ENCODE measurements at regions of chr1 and their contacts with region 1.

Region 1: DNA sequence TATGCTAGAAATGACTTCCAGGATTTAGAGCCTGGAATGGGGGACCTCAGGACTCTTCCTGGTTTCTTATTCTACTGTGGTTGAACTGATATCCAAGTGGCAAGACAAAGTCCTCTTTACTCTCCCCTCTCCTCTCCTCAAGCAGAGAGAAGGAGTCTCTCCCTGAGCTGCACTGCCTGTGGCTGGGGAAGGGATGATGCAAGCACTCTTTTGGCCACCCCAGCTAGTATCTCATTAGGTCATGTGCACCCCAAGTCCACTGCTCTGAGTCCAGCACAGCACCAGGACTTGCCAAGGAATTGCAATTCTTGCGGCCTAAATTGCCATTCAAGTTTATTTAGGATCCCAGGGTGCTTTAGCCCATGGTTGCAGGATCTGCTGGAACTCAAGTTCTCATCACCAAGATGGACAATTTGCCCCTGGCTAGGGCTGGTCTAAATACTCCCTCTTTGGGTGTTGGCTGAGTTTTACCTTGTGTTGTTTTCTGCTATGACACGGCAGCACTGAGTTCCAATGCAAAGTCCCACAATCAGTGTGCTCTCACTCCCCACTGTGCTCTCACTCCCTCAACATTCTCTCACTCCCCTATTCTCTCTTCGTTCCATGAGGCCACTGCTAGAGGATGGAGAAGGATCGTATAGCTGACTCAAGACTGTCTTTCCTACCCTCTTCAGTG is 172.2 kb downstream of the TM2D1 start:
- DNase-seq: no peak
- ATAC-seq: no peak
- H3K4me3 Mint-ChIP-seq: no peak overlapping the region
- H3K27ac Mint-ChIP-seq: no peak overlapping the region
- H3K4me1 Mint-ChIP-seq: no peaks in the 10 kb centered on the region
- H3K27me3 Mint-ChIP-seq: no peaks in the 10 kb centered on the region; the same call in 1 of the 2 replicates
- CTCF ChIP-seq: no peak

Region 2: GRCh38 chr1:61583703-61584102 is 30.9 kb after region 1 on chr1:
- CTCF ChIA-PET with region 1: interaction called, 22 read pairs
- POLR2A ChIA-PET with region 1: no interaction called
- DNase-seq: no peak
- ATAC-seq: no peak
- H3K4me3 Mint-ChIP-seq: no peak overlapping the region
- H3K27ac Mint-ChIP-seq: no peak overlapping the region
- H3K4me1 Mint-ChIP-seq: peaks cover 24% of the 10 kb centered on the region
- H3K27me3 Mint-ChIP-seq: no peaks in the 10 kb centered on the region; the same call in 1 of the 2 replicates
- CTCF ChIP-seq: no peak

Region 3: GRCh38 chr1:61588736-61589672 is 36.2 kb after region 1 on chr1:
- CTCF ChIA-PET with region 1: interaction called, 22 read pairs
- POLR2A ChIA-PET with region 1: no interaction called
- DNase-seq: peak; percentile 81
- ATAC-seq: peak; percentile 89
- H3K4me3 Mint-ChIP-seq: 0 out of 2 replicates have a peak overlapping the region, but pooled peaks have one; percentile 17
- H3K27ac Mint-ChIP-seq: peak overlapping the region; percentile 71
- H3K4me1 Mint-ChIP-seq: peaks cover 30% of the 10 kb centered on the region
- H3K27me3 Mint-ChIP-seq: no peaks in the 10 kb centered on the region; the same call in 1 of the 2 replicates
- CTCF ChIP-seq: peak; percentile 85

Region 4: DNA sequence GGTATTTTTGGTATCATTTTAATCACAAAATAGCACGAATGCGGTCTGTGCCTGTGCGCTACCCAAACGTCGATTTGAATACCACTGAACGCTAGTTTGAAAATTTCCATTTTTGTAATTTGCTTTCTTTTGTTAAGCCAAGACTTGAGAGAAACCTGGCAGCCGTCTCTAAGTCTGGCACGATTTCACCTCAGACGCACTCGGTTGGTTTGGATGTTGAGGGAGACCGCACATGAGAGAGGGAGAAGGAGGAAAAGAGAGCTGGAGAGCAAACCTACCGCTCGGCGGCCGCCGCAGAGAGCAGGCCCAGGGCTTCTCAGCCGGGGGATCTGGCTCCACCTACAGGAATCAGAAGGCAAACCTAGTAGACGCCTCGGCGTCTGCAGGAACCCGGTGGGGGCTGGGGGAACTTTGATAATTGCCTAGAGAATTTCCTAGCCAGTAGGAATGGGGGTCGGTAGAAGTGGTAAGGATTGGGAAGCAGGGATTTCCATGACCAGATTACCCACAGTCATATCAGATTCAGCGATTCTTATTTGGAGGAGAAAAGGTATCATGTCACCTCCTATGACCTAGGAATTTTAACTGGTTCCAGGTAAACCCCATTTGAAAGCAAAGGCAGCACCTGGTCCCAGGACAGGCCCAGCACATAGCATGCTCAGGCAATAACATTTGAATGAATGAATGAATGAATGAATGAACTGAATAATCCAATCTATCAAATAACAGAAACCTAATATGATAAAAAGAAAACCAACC is 89.0 kb after region 1 on chr1:
- CTCF ChIA-PET with region 1: interaction called, 16 read pairs
- POLR2A ChIA-PET with region 1: no interaction called
- DNase-seq: peak; percentile 87
- ATAC-seq: peak; percentile 97
- H3K4me3 Mint-ChIP-seq: peak overlapping the region; percentile 33
- H3K27ac Mint-ChIP-seq: peak overlapping the region; percentile 80; the same call in 1 of the 2 replicates
- H3K4me1 Mint-ChIP-seq: peaks cover 37% of the 10 kb centered on the region
- H3K27me3 Mint-ChIP-seq: peaks cover 12% of the 10 kb centered on the region
- CTCF ChIP-seq: peak; percentile 72